ENCODE measurements at regions of chr10 and their contacts with region 1.

Region 1: GRCh38 chr10:75469006-75469616 is 37.7 kb downstream of the LRMDA start:
- DNase-seq: peak in 3 of 5 donors; percentile 13 to 49 (median 33)
- ATAC-seq: peak; percentile 56 to 90 (median 72)
- H3K4me3 ChIP-seq: no peak overlapping the region
- H3K27ac ChIP-seq: peak overlapping the region in 8 of 12 donors; percentile 3 to 68 (median 33)
- H3K4me1 ChIP-seq: peaks cover 0 to 45% (median 16%) of the 10 kb centered on the region in 12 donors
- H3K27me3 ChIP-seq: no peaks in the 10 kb centered on the region
- CTCF ChIP-seq: no peak
- POLR2A ChIP-seq: no peak

Region 2: GRCh38 chr10:75431180-75432111 is 37.7 kb before region 1 on chr10 and contains the start of gene LRMDA:
- intact Hi-C with region 1: loop called in 1 of 10 experiments (anchors 5 kb)
- DNase-seq: peak; percentile 46 to 81 (median 63)
- ATAC-seq: peak in 3 of 4 donors; percentile 58 to 82 (median 78)
- H3K4me3 ChIP-seq: peak within 1 kb of the TSS; percentile 54 to 84 (median 70)
- H3K27ac ChIP-seq: peak within 1 kb of the TSS; percentile 49 to 92 (median 78)
- H3K4me1 ChIP-seq: peaks cover 0 to 59% (median 35%) of the 10 kb centered on the region in 12 donors
- H3K27me3 ChIP-seq: no peaks in the 10 kb centered on the region
- CTCF ChIP-seq: no peak
- POLR2A ChIP-seq: no peak
- total RNA-seq, gene LRMDA: 7.7 to 34.4 (median 14.9) TPM

Region 3: GRCh38 chr10:75612904-75613684 is 144.0 kb after region 1 on chr10:
- intact Hi-C with region 1: no loop called
- DNase-seq: peak in 1 of 5 donors; percentile 28
- ATAC-seq: peak; percentile 51 to 89 (median 74)
- H3K4me3 ChIP-seq: no peak overlapping the region
- H3K27ac ChIP-seq: peak overlapping the region in 2 of 12 donors; percentile 9 to 89
- H3K4me1 ChIP-seq: peaks cover 0 to 58% (median 15%) of the 10 kb centered on the region in 12 donors
- H3K27me3 ChIP-seq: no peaks in the 10 kb centered on the region
- CTCF ChIP-seq: no peak
- POLR2A ChIP-seq: no peak

Measured in heart left ventricle (tissue), 16 donors.